ENCODE measurements at regions of chr22 and their contacts with region 1.

Region 1: GRCh38 chr22:31036671-31037550 is 44.2 kb upstream of the SMTN start:
- DNase-seq: peak in 1 of 5 donors; percentile 33
- ATAC-seq: no peak
- H3K4me3 ChIP-seq: peak overlapping the region in 6 of 12 donors; percentile 8 to 30 (median 22)
- H3K27ac ChIP-seq: peak overlapping the region in 9 of 12 donors; percentile 18 to 87 (median 34)
- H3K4me1 ChIP-seq: peaks cover 0 to 38% (median 13%) of the 10 kb centered on the region in 12 donors
- H3K27me3 ChIP-seq: no peaks in the 10 kb centered on the region
- CTCF ChIP-seq: no peak
- POLR2A ChIP-seq: no peak

Region 2: GRCh38 chr22:30979932-30980331 is 57.0 kb before region 1 on chr22:
- intact Hi-C with region 1: loop called in 3 of 10 experiments (anchors 10 kb)
- DNase-seq: no peak
- ATAC-seq: no peak
- H3K4me3 ChIP-seq: no peak overlapping the region
- H3K27ac ChIP-seq: no peak overlapping the region
- H3K4me1 ChIP-seq: no peaks in the 10 kb centered on the region
- H3K27me3 ChIP-seq: no peaks in the 10 kb centered on the region
- CTCF ChIP-seq: no peak
- POLR2A ChIP-seq: no peak